ENCODE measurements at regions of chr9 and their contacts with region 1.

Region 1: DNA sequence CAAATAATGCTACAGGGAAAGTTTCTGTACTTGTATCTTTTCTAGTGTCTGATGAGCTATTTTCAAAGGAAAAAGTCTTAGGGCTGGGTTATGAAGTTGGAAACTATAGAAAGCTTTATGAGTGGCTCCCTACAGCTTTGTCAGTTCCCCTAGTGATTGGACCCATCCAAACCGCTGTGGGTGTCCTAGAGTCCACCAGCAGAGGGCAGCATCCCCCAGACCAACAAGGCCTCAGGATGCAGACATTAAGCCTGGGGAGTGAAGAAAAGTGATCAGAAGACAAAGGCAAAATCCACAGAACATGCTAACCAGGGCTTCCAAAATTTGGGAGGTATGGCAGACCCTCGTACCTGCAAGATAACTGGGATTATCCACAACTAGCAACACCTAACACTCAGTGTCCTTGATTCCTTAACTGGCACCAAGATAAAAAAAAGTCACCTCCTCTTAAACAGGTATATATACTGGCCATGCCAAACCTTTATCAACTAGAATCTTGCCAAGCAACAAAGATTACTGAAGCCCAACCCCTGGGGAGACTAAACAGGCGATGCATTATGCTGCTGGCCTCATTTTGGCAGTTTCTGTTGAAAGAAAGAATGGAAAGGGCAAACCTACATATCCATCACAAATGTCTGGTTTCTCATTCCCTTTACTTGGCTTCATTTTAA is 110.4 kb upstream of the NR5A1 start:
- DNase-seq: peak; percentile 56
- ATAC-seq: peak; percentile 79
- H3K4me3 ChIP-seq: no peak overlapping the region
- H3K27ac ChIP-seq: no peak overlapping the region
- H3K4me1 ChIP-seq: peaks cover 15% of the 10 kb centered on the region; the same call in 1 of the 2 replicates
- H3K27me3 ChIP-seq: no peaks in the 10 kb centered on the region
- CTCF ChIP-seq: peak; percentile 90 to 95 (median 94); a peak in 5 of 6 replicates
- EP300 ChIP-seq: no peak
- POLR2A ChIP-seq: no peak
- RAD21 ChIP-seq: peak; percentile 99

Region 2: DNA sequence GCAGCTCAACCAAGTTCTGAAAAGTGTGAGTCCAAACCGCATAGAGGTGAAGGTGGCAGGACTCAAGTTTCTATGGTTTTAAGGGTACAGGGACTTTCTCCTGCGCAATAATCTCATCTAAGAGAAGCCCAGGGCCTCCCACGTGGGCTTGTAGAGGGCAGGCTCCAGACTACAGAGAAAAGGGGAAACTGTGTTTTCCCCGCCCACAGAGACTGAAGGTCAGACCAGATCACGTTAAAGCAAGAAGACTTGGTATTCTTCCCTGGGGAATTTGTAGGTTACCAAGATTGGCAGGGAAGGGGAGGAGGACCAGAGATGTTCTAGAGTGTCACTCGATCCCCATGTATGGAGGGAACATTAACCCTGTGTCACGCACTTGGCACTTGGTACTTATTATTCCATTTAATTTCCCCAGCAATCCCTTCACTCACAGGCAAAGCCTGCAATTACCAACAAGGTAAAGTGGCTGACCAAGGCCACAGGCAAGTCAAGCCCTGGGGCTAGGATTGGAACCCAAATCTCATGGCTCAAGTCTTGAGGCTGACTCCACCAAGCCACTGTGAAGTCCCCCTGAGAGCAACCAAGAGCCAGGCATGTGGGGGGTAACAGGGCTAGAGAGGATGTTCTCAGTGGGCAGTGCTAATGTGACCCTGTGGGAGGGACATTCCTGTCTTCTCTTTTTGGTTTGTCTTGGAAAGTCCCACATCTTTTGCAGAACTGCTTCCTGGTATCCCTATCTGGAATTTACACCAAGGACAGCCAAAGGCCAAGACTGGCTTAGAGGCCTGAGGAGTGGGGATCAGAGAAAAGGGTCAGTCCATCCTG is 378.1 kb before region 1 on chr9:
- CTCF ChIA-PET with region 1: no interaction called
- POLR2A ChIA-PET with region 1: no interaction called
- RAD21 ChIA-PET with region 1: no interaction called
- SMC1A ChIA-PET with region 1: no interaction called
- in situ Hi-C with region 1: no loop called
- intact Hi-C with region 1: no loop called
- DNase-seq: peak; percentile 72
- ATAC-seq: peak; percentile 95
- H3K4me3 ChIP-seq: no peak overlapping the region
- H3K27ac ChIP-seq: peak overlapping the region; percentile 89
- H3K4me1 ChIP-seq: peaks cover 39% of the 10 kb centered on the region
- H3K27me3 ChIP-seq: no peaks in the 10 kb centered on the region
- CTCF ChIP-seq: no peak
- EP300 ChIP-seq: peak; percentile 37 to 52; a peak in 2 of 4 replicates
- POLR2A ChIP-seq: no peak
- RAD21 ChIP-seq: no peak

Region 3: GRCh38 chr9:124595743-124596142 is 21.9 kb before region 1 on chr9:
- CTCF ChIA-PET with region 1: interaction called, 22 read pairs
- POLR2A ChIA-PET with region 1: no interaction called
- RAD21 ChIA-PET with region 1: interaction called, 5 read pairs
- SMC1A ChIA-PET with region 1: interaction called, 11 read pairs
- in situ Hi-C with region 1: no loop called
- intact Hi-C with region 1: no loop called
- DNase-seq: no peak
- ATAC-seq: no peak
- H3K4me3 ChIP-seq: no peak overlapping the region
- H3K27ac ChIP-seq: no peak overlapping the region
- H3K4me1 ChIP-seq: peaks cover 9% of the 10 kb centered on the region; the same call in 1 of the 2 replicates
- H3K27me3 ChIP-seq: no peaks in the 10 kb centered on the region
- CTCF ChIP-seq: no peak
- EP300 ChIP-seq: no peak
- POLR2A ChIP-seq: no peak
- RAD21 ChIP-seq: no peak

Region 4: GRCh38 chr9:124658165-124659017 is 40.8 kb after region 1 on chr9:
- CTCF ChIA-PET with region 1: interaction called, 95 read pairs
- POLR2A ChIA-PET with region 1: interaction called, 146 read pairs
- RAD21 ChIA-PET with region 1: interaction called, 172 read pairs
- SMC1A ChIA-PET with region 1: interaction called, 160 read pairs
- in situ Hi-C with region 1: no loop called
- intact Hi-C with region 1: loop called (anchors 1 kb)
- DNase-seq: peak; percentile 93
- ATAC-seq: peak; percentile 91
- H3K4me3 ChIP-seq: peak overlapping the region; percentile 75
- H3K27ac ChIP-seq: peak overlapping the region; percentile 96
- H3K4me1 ChIP-seq: 0 out of 2 replicates have a peak, but pooled peaks cover 3% of the 10 kb centered on the region
- H3K27me3 ChIP-seq: no peaks in the 10 kb centered on the region
- CTCF ChIP-seq: no peak
- EP300 ChIP-seq: no peak
- POLR2A ChIP-seq: peak; percentile 95
- RAD21 ChIP-seq: no peak

Region 5: DNA sequence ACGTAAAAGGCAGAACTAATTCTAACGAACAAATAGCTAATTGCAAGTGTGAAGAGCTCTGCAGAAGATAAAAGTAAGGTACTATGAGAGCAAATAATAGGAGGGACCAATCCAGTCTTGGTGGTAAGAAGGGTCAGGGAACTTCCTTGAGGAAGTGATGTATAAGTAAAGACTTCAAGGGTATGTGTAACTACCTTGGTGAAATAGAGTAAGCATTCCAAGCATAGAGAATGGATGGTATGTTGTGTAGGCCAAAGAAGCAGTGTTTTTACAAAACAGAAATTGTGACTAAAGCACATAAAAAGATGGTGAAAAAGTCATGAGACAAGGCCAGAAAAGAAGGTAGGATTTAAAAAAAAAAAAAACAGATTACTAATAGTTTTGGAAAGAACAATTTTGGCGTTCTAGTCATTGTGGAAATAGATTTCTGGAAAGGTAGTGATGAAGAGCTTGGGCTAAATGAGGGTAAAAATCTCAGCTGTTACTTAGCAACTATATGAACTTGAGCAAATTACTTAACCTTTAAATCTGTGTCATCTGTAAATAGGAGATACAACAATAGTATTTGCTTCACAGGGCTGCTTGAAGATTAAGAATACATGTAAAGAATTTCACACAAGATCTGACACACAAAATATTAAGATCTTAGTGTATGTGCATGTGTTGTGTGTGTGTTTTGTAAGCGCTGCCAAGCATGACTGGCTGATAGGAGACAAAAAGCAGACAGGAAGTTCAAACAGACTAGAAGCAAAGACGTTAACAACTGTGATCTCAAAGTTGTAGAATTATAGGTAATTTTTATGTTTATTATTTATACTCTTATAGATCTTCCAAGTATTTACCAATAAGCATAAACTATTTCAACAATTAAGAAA is 80.0 kb after region 1 on chr9:
- CTCF ChIA-PET with region 1: interaction called, 26 read pairs
- POLR2A ChIA-PET with region 1: no interaction called
- RAD21 ChIA-PET with region 1: interaction called, 7 read pairs
- SMC1A ChIA-PET with region 1: interaction called, 320 read pairs
- in situ Hi-C with region 1: no loop called
- intact Hi-C with region 1: no loop called
- DNase-seq: no peak
- ATAC-seq: no peak
- H3K4me3 ChIP-seq: no peak overlapping the region
- H3K27ac ChIP-seq: no peak overlapping the region
- H3K4me1 ChIP-seq: no peaks in the 10 kb centered on the region
- H3K27me3 ChIP-seq: no peaks in the 10 kb centered on the region
- CTCF ChIP-seq: no peak
- EP300 ChIP-seq: no peak
- POLR2A ChIP-seq: no peak
- RAD21 ChIP-seq: no peak

Region 6: DNA sequence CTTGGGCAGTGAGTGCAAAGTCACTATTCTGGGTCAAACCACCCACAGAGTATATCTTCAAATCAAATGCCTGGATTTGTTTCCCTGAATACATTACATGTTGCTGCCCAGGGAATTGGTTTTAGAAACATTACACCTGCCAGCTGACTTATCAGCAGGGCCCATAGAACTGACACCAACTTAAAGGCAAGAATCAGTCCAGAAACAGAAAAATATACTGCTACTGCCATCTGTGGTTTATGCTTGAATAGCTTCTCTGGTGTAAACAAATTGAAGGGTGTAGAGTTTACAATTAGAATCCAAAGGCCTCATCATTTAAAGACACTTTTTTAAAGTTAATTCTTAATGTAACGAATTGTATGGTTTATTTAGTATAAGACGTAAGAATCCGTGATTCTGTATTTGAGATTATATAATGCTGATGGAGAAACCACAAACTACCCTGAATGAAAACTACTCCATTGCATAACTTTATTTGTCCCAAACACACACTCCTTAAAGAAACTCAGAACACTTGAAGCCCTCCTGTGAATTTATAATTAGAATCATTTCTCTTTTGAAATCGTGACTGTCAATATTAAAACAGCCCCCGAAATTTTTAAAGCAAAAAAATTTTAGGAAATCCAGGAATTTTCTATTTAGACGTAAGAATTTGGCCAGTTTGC is 147.3 kb after region 1 on chr9:
- CTCF ChIA-PET with region 1: interaction called, 181 read pairs
- POLR2A ChIA-PET with region 1: interaction called, 12 read pairs
- RAD21 ChIA-PET with region 1: interaction called, 86 read pairs
- SMC1A ChIA-PET with region 1: interaction called, 92 read pairs
- in situ Hi-C with region 1: no loop called
- intact Hi-C with region 1: loop called (anchors 2 kb)
- DNase-seq: no peak
- ATAC-seq: peak; percentile 81
- H3K4me3 ChIP-seq: no peak overlapping the region; the same call in 1 of the 2 replicates
- H3K27ac ChIP-seq: peak overlapping the region; percentile 28; the same call in 1 of the 2 replicates
- H3K4me1 ChIP-seq: peaks cover 9% of the 10 kb centered on the region
- H3K27me3 ChIP-seq: no peaks in the 10 kb centered on the region
- CTCF ChIP-seq: peak; percentile 33 to 62 (median 54); a peak in 5 of 6 replicates
- EP300 ChIP-seq: no peak
- POLR2A ChIP-seq: no peak
- RAD21 ChIP-seq: peak; percentile 62